Dendritic cell treated with granulocyte-macrophage colony-stimulating factor and Interleukin-4, amounts not matched to agents 40 ng/mL and 50 ng/mL, for 4 days (primary cell): ENCODE measurements at regions of chr22 and their contacts with region 1.

Region 1: GRCh38 chr22:30104501-30105156 is 24.4 kb downstream of the HORMAD2 start:
- H3K4me3 Mint-ChIP-seq: no peak overlapping the region
- H3K27ac Mint-ChIP-seq: no peak overlapping the region
- H3K4me1 Mint-ChIP-seq: peaks cover 8% of the 10 kb centered on the region
- H3K27me3 Mint-ChIP-seq: peaks cover 4% of the 10 kb centered on the region

Region 2: DNA sequence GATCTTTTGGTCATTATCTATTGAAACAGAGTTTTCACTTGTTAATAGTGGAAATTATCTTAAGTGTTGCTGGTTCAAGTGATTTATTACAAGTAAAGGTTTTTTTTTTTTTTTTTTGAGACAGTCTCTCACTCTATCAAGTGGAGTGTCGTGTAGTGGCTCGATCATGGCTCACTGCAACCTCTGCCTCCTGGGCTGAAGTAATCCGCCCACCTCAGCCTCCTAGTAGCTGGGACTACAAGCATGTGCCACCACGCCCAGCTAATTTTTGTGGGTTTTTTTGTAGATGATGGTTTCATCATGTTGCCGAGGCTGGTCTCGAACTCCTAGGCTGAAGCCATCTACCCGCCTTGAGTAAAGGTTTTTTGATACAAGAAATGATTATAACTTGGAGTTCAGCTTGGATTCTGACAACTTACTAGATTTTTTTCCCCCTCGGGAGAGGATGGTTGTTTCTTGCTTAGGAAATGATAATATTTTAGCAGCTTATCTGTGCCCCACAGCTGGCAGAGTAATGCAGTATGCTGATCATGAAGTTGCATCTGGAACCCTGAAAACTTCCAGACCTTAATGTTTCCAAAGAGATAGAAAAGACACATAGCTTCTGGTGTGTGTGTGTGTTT is 152.7 kb before region 1 on chr22:
- intact Hi-C with region 1: no loop called
- H3K4me3 Mint-ChIP-seq: no peak overlapping the region
- H3K27ac Mint-ChIP-seq: no peak overlapping the region
- H3K4me1 Mint-ChIP-seq: peaks cover 22% of the 10 kb centered on the region
- H3K27me3 Mint-ChIP-seq: no peaks in the 10 kb centered on the region

Region 3: DNA sequence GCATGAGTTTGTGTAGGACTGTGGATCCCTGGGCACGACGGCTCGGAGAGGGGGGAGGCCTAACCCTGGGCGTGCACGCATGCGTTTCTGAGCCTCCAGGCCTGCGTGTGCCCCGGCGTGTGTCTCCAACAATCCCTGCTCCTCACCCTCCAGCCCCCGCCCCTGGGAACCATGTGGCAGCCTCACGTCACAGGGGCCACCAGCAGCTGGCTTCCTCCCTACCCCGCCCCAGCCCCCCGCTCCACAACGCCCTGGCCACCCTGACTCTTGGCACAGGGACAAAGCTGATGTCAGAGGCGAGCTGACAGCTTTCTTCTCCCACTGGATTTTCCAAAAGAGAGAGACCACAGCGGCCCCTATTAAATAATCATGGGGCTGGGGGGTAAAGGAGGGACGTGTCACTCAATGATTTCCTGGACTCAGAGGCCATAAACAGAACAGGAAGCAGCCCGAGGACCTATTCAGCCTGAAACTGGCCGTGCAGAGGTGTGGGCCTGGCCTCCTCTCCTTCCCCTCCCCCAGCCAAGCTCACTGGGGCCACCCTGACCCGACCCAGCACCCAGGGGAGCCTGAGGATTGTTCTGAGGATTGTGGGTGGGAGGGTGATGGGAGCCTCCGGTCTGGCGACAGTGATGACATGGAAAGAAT is 148.7 kb after region 1 on chr22:
- intact Hi-C with region 1: loop called (anchors 1 kb)
- H3K4me3 Mint-ChIP-seq: no peak overlapping the region
- H3K27ac Mint-ChIP-seq: peak overlapping the region; percentile 24
- H3K4me1 Mint-ChIP-seq: peaks cover 48% of the 10 kb centered on the region
- H3K27me3 Mint-ChIP-seq: peaks cover 36% of the 10 kb centered on the region